HepG2 (cell line): ENCODE measurements at regions of chr13 and their contacts with region 1.

Region 1: DNA sequence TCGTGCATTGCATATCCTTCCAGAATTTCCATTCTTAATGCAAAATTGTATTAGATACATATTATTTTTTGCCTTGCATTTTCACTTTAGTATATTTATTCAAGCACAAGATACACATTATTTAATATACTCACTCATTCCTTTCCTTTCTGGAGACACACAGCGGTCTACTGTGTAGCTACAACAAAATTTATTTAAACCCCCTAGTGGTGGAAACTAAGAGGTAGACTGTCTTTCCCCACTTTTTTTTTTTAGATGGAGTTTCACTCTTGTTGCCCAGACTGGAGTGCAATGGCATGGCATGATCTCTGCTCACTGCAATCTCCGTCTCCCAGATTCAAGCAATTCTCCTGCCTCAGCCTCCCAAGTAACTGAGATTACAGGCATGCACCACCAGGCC is 2040.3 kb upstream of the PCDH20 start:
- DNase-seq: no peak
- ATAC-seq: peak; percentile 82
- H3K4me3 ChIP-seq: no peak overlapping the region
- H3K27ac ChIP-seq: no peak overlapping the region
- H3K4me1 ChIP-seq: no peaks in the 10 kb centered on the region
- H3K27me3 ChIP-seq: no peaks in the 10 kb centered on the region
- CTCF ChIP-seq: no peak
- EP300 ChIP-seq: no peak
- POLR2A ChIP-seq: no peak
- RAD21 ChIP-seq: no peak

Region 2: DNA sequence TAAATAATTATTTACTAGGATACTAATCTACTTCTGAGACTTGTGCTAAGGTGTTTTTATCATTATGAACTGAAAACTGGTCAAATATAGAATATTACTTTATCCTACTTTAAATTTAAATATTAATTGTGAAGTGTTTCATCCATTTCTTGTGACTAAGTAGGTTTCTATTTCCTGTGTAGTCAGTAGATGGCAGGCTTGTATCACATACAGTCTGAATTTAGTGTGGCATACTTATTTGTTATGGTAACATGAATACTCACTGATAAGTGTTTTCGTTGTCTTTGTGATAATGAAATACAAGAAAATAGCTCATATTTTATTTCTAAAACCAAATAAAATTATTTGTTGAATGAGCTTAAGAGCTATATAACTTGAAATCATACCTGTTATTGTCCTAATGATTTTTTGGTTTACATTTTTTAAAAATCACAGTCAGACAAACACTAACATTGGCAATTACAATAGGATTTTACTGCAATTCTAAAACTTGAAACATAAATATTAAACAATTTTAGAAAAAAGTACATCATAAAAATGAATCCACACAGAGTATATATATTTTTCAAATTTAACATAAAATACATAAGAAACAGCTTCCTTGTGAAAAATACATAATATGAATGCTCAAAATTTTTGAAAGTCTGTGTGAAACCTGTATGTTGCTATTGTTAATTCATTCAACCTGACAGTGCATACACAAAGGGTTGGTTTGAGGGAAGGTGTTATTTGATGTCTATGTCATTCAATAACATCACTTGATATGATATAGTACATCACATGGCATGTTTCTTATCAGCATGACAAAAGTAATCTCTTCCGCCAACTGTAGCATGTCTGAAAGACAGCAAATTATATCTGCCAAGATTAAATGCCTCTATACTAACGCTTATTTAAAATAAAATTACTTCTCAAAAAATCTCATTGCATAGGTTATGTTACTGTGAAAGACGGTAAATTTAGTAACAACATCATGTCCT is 1135.5 kb before region 1 on chr13:
- CTCF ChIA-PET with region 1: no interaction called
- POLR2A ChIA-PET with region 1: no interaction called
- in situ Hi-C with region 1: no loop called
- intact Hi-C with region 1: loop called (anchors 5 kb)
- DNase-seq: peak; percentile 22
- ATAC-seq: peak; percentile 46; the same call in 1 of the 3 replicates
- H3K4me3 ChIP-seq: no peak overlapping the region
- H3K27ac ChIP-seq: no peak overlapping the region
- H3K4me1 ChIP-seq: no peaks in the 10 kb centered on the region
- H3K27me3 ChIP-seq: no peaks in the 10 kb centered on the region
- CTCF ChIP-seq: peak; percentile 58
- EP300 ChIP-seq: no peak
- POLR2A ChIP-seq: no peak
- RAD21 ChIP-seq: no peak

Region 3: GRCh38 chr13:63910511-63910910 is 454.6 kb after region 1 on chr13:
- CTCF ChIA-PET with region 1: no interaction called
- POLR2A ChIA-PET with region 1: no interaction called
- in situ Hi-C with region 1: no loop called
- intact Hi-C with region 1: no loop called
- DNase-seq: peak; percentile 3
- ATAC-seq: no peak; the same call in 2 of the 3 replicates
- H3K4me3 ChIP-seq: no peak overlapping the region
- H3K27ac ChIP-seq: no peak overlapping the region
- H3K4me1 ChIP-seq: no peaks in the 10 kb centered on the region
- H3K27me3 ChIP-seq: peaks cover 0 to 5% of the 10 kb centered on the region in 2 experiments; a peak in 1 of 5 replicates
- CTCF ChIP-seq: no peak
- EP300 ChIP-seq: no peak
- POLR2A ChIP-seq: no peak
- RAD21 ChIP-seq: no peak